ENCODE measurements at regions of chr9 and their contacts with region 1.

Region 1: GRCh38 chr9:72364679-72365524 is at the start of gene ZFAND5:
- DNase-seq: peak; percentile 99
- ATAC-seq: peak; percentile 84 to 93 (median 88)
- H3K4me3 ChIP-seq: peak within 1 kb of the TSS; percentile 73 to 81 (median 74)
- H3K27ac ChIP-seq: peak within 1 kb of the TSS; percentile 99 to 100 (median 100)
- H3K4me1 ChIP-seq: peaks cover 0 to 15% (median 7%) of the 10 kb centered on the region in 4 donors
- H3K27me3 ChIP-seq: no peaks in the 10 kb centered on the region
- CTCF ChIP-seq: peak in 1 of 4 donors; percentile 14
- POLR2A ChIP-seq: peak; percentile 100
- total RNA-seq, gene ZFAND5: 88.4 to 119 (median 100) TPM

Region 2: GRCh38 chr9:72292256-72292682 is 72.6 kb before region 1 on chr9:
- intact Hi-C with region 1: loop called in 1 of 2 experiments (anchors 10 kb)
- DNase-seq: no peak
- ATAC-seq: peak; percentile 52 to 66 (median 62)
- H3K4me3 ChIP-seq: no peak overlapping the region
- H3K27ac ChIP-seq: peak overlapping the region in 2 of 3 donors; percentile 5
- H3K4me1 ChIP-seq: peaks cover 0 to 31% (median 11%) of the 10 kb centered on the region in 4 donors
- H3K27me3 ChIP-seq: no peaks in the 10 kb centered on the region
- CTCF ChIP-seq: peak; percentile 55 to 62 (median 59)
- POLR2A ChIP-seq: no peak

Region 3: GRCh38 chr9:72557549-72557948 is 192.6 kb after region 1 on chr9:
- intact Hi-C with region 1: loop called in 1 of 2 experiments (anchors 10 kb)
- DNase-seq: no peak
- ATAC-seq: peak in 3 of 4 donors; percentile 52 to 68 (median 62)
- H3K4me3 ChIP-seq: no peak overlapping the region
- H3K27ac ChIP-seq: peak overlapping the region in 1 of 3 donors; percentile 13
- H3K4me1 ChIP-seq: peaks cover 0 to 34% (median 0%) of the 10 kb centered on the region in 4 donors
- H3K27me3 ChIP-seq: no peaks in the 10 kb centered on the region
- CTCF ChIP-seq: no peak
- POLR2A ChIP-seq: no peak

Measured in right lobe of liver (tissue), 6 donors.